Mammary epithelial cell (primary cell): ENCODE measurements at regions of chr11 and their contacts with region 1.

Region 1: DNA sequence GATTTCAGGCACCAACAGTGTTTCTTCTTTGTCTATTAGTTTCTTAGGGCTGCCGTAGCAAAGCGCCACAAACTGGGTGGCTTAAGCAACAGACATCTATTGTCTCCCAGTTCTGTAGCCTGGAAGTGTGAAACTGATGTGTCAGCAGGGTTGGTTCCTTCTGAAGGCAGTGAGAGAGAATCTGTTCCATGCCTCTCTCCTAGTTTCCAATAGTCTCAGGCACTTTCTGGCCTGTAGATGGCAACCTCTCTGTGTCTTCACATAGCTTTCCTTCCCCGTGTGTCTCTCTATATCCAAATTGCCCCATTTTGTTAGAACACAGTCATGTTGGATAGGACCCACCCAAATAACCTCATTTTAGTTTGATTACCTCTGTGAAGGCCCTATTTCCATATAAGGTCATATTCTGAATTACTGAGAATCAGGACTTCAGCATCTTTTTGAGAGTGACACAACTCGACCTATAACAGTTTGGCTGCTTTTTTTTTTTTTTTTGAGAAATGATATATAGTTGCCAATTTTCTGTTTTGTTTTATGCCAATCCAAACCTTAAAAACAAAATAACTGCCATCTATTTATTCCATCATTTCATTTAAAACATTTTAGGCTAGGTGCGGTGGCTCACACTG is 108.2 kb downstream of the SLC36A4 start:
- DNase-seq: peak; percentile 63
- H3K4me3 ChIP-seq: no peak overlapping the region
- H3K27ac ChIP-seq: no peak overlapping the region
- H3K4me1 ChIP-seq: peaks cover 9% of the 10 kb centered on the region
- H3K27me3 ChIP-seq: no peaks in the 10 kb centered on the region
- CTCF ChIP-seq: peak; percentile 35 to 62

Region 2: DNA sequence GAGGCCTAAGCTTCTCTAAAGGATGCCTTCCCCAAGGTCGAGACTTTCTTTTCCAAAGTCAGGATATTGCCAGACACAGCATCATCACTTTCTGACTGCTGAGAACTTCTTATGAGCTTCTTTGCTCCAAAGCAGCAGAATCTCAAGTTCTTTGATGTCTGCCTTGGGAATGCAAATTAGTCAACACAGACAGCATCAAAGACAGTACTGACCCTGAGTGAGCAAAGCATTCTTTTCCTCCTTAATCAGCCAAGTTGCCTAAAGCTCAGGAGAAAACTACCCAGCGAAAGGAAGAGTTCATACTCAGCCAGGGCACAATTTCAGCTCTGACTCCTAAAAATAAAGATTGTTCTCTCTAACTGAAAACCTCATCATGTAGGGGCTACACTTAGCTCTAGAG is 10.2 kb after region 1 on chr11:
- CTCF ChIA-PET with region 1: no interaction called
- dilution Hi-C with region 1: no loop called
- in situ Hi-C with region 1: no loop called
- intact Hi-C with region 1: loop called (anchors 2 kb)
- DNase-seq: peak; percentile 23
- H3K4me3 ChIP-seq: no peak overlapping the region
- H3K27ac ChIP-seq: no peak overlapping the region
- H3K4me1 ChIP-seq: peaks cover 15% of the 10 kb centered on the region
- H3K27me3 ChIP-seq: no peaks in the 10 kb centered on the region
- CTCF ChIP-seq: no peak

Region 3: GRCh38 chr11:93197380-93198214 is 108.0 kb after region 1 on chr11 and contains the start of gene SLC36A4:
- CTCF ChIA-PET with region 1: no interaction called
- dilution Hi-C with region 1: no loop called
- in situ Hi-C with region 1: no loop called
- intact Hi-C with region 1: loop called (anchors 10 kb)
- DNase-seq: peak; percentile 92
- H3K4me3 ChIP-seq: peak within 1 kb of the TSS; percentile 78 to 92 (median 79)
- H3K27ac ChIP-seq: peak within 1 kb of the TSS; percentile 98
- H3K4me1 ChIP-seq: no peaks in the 10 kb centered on the region
- H3K27me3 ChIP-seq: no peaks in the 10 kb centered on the region
- CTCF ChIP-seq: no peak
- total RNA-seq, gene SLC36A4: 14.3 to 17.7 TPM